Activated naive CD4-positive, alpha-beta T cell treated with anti-CD3 and anti-CD28 coated beads for 36 hours (primary cell): ENCODE measurements at regions of chr2 and their contacts with region 1.

Region 1: DNA sequence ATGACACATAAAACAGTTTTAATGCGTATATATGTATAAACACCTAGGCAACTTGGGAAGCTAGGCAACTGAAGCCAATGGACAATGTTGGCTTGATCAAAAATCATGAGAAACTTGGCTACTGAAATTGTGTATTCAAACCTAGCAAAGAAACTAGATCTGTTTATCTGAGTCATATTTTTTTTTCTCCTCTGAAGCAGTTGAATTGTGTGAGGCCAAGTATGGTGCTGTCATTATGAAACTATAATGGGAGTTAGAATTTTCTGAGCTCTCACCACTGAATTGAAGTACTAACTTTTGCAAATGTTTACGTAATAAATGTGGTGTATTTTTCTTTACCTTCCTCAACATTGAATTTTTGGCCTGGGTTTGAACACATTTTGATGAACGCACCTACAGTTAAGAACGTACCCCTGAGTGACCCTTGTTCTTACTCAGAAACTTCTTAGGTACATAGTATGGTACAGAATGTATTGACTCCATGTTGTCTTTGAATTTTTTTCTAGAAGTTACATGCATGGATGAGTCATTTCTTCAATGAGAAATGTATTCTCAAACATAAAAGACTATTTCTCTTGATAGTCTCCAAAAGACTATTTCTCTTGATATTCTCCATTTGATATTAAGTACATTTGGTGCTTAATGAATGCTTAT is 23.8 kb downstream of the CD28 start:
- DNase-seq: no peak
- H3K4me3 Mint-ChIP-seq: peak overlapping the region; percentile 17
- H3K27ac Mint-ChIP-seq: peak overlapping the region; percentile 97
- H3K4me1 Mint-ChIP-seq: peaks cover 91% of the 10 kb centered on the region
- H3K27me3 Mint-ChIP-seq: no peaks in the 10 kb centered on the region

Region 2: GRCh38 chr2:203706403-203706802 is 23.8 kb before region 1 on chr2 and contains the start of gene CD28:
- CTCF ChIA-PET with region 1: interaction called, 9 read pairs
- intact Hi-C with region 1: loop called (anchors 1 kb)
- DNase-seq: peak; percentile 97
- H3K4me3 Mint-ChIP-seq: peak within 1 kb of the TSS; percentile 89
- H3K27ac Mint-ChIP-seq: peak within 1 kb of the TSS; percentile 93
- H3K4me1 Mint-ChIP-seq: peaks cover 37% of the 10 kb centered on the region
- H3K27me3 Mint-ChIP-seq: no peaks in the 10 kb centered on the region
- total RNA-seq, gene CD28: 165 to 167 TPM

Region 3: GRCh38 chr2:203748331-203749126 is 18.3 kb after region 1 on chr2:
- CTCF ChIA-PET with region 1: interaction called, 13 read pairs
- intact Hi-C with region 1: loop called (anchors 1 kb)
- DNase-seq: peak; percentile 67
- H3K4me3 Mint-ChIP-seq: peak overlapping the region; percentile 32
- H3K27ac Mint-ChIP-seq: peak overlapping the region; percentile 89
- H3K4me1 Mint-ChIP-seq: peaks cover 79% of the 10 kb centered on the region
- H3K27me3 Mint-ChIP-seq: no peaks in the 10 kb centered on the region

Region 4: GRCh38 chr2:203858176-203858575 is 128.0 kb after region 1 on chr2:
- CTCF ChIA-PET with region 1: interaction called, 3 read pairs
- intact Hi-C with region 1: loop called (anchors 1 kb)
- DNase-seq: peak; percentile 65
- H3K4me3 Mint-ChIP-seq: no peak overlapping the region
- H3K27ac Mint-ChIP-seq: peak overlapping the region; percentile 60
- H3K4me1 Mint-ChIP-seq: peaks cover 85% of the 10 kb centered on the region
- H3K27me3 Mint-ChIP-seq: no peaks in the 10 kb centered on the region

Region 5: DNA sequence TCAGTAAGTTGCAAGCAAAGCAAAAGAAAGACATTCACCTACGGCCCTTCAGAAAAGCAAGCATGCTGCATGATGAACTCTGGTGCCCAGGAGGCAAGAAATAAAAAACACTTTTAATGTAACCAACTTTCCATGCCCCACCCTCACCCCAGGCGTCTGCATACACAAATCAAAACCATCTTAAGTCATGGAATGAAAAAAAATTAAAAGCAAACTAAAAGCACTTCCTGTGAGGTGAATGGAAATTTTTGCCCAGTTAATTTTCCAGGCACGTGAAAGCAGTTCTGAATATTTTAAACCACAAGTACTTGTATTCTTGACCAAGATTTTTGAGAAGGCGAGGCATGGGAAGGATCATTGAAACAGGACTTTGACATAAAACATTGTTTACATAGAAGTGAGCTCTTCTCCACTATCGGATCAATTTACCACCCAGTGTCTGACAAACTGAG is 203.9 kb after region 1 on chr2:
- CTCF ChIA-PET with region 1: no interaction called
- intact Hi-C with region 1: loop called (anchors 2 kb)
- DNase-seq: peak; percentile 78
- H3K4me3 Mint-ChIP-seq: peak overlapping the region; percentile 51
- H3K27ac Mint-ChIP-seq: peak overlapping the region; percentile 96
- H3K4me1 Mint-ChIP-seq: peaks cover 64% of the 10 kb centered on the region
- H3K27me3 Mint-ChIP-seq: no peaks in the 10 kb centered on the region

Region 6: GRCh38 chr2:203972066-203972465 is 241.9 kb after region 1 on chr2:
- CTCF ChIA-PET with region 1: no interaction called
- intact Hi-C with region 1: no loop called
- DNase-seq: no peak
- H3K4me3 Mint-ChIP-seq: no peak overlapping the region
- H3K27ac Mint-ChIP-seq: no peak overlapping the region
- H3K4me1 Mint-ChIP-seq: peaks cover 17% of the 10 kb centered on the region
- H3K27me3 Mint-ChIP-seq: no peaks in the 10 kb centered on the region

Region 7: DNA sequence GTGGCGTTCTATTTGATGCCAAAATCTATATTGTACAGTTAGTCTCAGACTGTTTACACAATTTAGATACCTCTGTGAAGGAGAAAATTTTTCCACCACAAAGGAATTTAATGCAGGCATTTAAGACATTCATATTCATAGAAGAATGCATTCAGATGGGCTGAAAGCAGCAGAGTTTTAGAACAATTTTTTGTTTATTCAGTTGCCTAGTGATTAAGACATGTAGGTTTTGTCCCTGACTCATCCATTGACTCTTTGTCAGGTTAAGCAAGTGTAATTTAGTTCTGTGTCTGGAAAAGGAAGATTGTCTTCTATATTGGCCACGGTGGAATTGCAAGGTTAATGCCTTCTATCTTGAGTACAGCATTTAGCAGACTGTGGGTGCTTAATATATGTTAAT is 1330.1 kb after region 1 on chr2:
- CTCF ChIA-PET with region 1: no interaction called
- intact Hi-C with region 1: no loop called
- DNase-seq: no peak
- H3K4me3 Mint-ChIP-seq: no peak overlapping the region
- H3K27ac Mint-ChIP-seq: no peak overlapping the region
- H3K4me1 Mint-ChIP-seq: peaks cover 26% of the 10 kb centered on the region
- H3K27me3 Mint-ChIP-seq: no peaks in the 10 kb centered on the region